ENCODE measurements at regions of chr10 and their contacts with region 1.

Region 1: GRCh38 chr10:70758757-70759514 is 26.2 kb downstream of the TBATA start:
- DNase-seq: peak; percentile 48
- ATAC-seq: peak; percentile 78
- H3K4me3 ChIP-seq: no peak overlapping the region
- H3K27ac ChIP-seq: peak overlapping the region; percentile 40; the same call in 1 of the 2 replicates
- H3K4me1 ChIP-seq: no peaks in the 10 kb centered on the region
- H3K27me3 ChIP-seq: no peaks in the 10 kb centered on the region
- CTCF ChIP-seq: peak; percentile 89

Region 2: DNA sequence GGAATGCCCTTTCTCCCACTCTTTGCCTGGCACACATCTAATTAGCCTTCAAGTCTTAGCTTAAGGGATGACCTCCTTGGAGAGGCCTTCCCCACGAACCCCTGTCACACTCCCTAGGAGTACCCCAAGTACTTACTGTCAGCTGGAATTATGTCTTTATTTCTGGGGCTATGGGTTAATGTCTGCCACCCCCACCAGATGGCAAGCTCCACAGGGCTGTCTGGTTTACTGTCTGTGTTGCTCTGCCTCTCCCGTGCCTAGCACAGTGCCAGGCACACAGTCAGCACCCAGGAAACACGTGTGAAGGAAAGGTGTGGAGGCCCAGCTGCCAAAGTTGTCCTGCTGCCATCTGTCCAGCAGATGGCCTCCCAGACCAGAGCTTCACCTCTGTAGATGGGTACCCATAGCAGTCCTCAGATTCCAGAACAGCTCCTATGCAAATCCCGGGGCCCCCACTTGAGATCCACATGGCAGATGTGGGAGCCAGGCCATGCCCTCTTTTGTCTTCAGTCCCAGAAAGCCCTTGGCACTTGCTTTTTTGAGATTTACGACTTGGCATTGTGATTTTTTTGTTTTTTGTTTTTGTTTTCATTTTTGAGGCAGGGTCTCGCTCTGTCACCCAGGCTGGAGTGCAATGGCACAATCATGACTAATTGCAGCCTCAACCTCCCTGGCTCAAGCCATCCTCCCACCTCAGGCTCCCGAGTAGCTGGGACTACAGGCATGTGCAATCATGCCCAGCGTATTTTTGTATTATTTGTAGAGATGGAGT is 297.5 kb before region 1 on chr10:
- CTCF ChIA-PET with region 1: interaction called, 3 read pairs
- POLR2A ChIA-PET with region 1: no interaction called
- in situ Hi-C with region 1: no loop called
- intact Hi-C with region 1: loop called (anchors 5 kb)
- DNase-seq: peak; percentile 55
- ATAC-seq: peak; percentile 86
- H3K4me3 ChIP-seq: no peak overlapping the region
- H3K27ac ChIP-seq: no peak overlapping the region
- H3K4me1 ChIP-seq: peaks cover 6% of the 10 kb centered on the region
- H3K27me3 ChIP-seq: no peaks in the 10 kb centered on the region
- CTCF ChIP-seq: peak; percentile 98

Region 3: GRCh38 chr10:70493660-70494234 is 265.2 kb before region 1 on chr10:
- CTCF ChIA-PET with region 1: no interaction called
- POLR2A ChIA-PET with region 1: no interaction called
- in situ Hi-C with region 1: no loop called
- intact Hi-C with region 1: no loop called
- DNase-seq: no peak
- ATAC-seq: no peak
- H3K4me3 ChIP-seq: no peak overlapping the region
- H3K27ac ChIP-seq: no peak overlapping the region
- H3K4me1 ChIP-seq: no peaks in the 10 kb centered on the region
- H3K27me3 ChIP-seq: no peaks in the 10 kb centered on the region
- CTCF ChIP-seq: no peak

Region 4: DNA sequence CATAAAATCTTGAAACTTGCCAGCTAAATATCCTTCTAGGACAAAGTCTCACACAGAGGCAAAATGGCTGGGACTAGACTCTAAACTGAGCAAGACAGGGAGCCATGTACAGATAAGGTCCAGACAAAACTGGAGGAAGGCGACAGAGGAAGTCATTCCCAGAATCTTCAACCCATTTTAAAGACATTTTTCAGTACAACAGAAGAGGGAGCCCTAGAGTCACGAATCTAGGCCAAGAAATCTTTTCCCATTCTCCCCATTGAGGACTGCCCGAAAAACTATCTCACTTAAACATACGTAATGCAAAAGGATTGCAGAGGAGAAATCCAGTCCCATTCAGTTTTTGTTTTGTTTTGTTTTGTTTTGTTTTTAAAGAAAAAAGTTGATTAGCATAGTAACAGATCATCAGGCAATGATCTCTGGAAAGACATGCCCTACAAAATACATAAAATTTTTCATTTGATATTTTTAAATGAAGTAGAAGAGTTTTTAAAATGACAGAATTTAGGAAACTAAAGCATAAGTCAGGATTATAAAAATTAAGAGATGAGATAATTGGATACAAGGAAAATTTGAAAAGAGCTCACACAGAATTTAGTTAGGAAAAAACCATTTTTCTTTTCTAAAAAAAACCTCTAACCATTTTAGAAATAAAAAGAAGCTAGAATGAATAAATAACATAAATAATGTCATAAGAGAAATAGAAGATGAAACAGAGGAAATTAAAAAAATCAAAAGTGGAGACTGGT is 139.5 kb before region 1 on chr10:
- CTCF ChIA-PET with region 1: no interaction called
- POLR2A ChIA-PET with region 1: no interaction called
- in situ Hi-C with region 1: no loop called
- intact Hi-C with region 1: loop called (anchors 10 kb)
- DNase-seq: peak; percentile 10
- ATAC-seq: no peak
- H3K4me3 ChIP-seq: no peak overlapping the region
- H3K27ac ChIP-seq: no peak overlapping the region
- H3K4me1 ChIP-seq: no peaks in the 10 kb centered on the region
- H3K27me3 ChIP-seq: peaks cover 23% of the 10 kb centered on the region
- CTCF ChIP-seq: peak; percentile 50

Region 5: GRCh38 chr10:70682920-70683600 is 75.9 kb before region 1 on chr10:
- CTCF ChIA-PET with region 1: no interaction called
- POLR2A ChIA-PET with region 1: no interaction called
- in situ Hi-C with region 1: no loop called
- intact Hi-C with region 1: no loop called
- DNase-seq: no peak
- ATAC-seq: no peak
- H3K4me3 ChIP-seq: no peak overlapping the region
- H3K27ac ChIP-seq: no peak overlapping the region
- H3K4me1 ChIP-seq: no peaks in the 10 kb centered on the region; the same call in 1 of the 2 replicates
- H3K27me3 ChIP-seq: no peaks in the 10 kb centered on the region
- CTCF ChIP-seq: no peak

Region 6: GRCh38 chr10:70699659-70700174 is 59.2 kb before region 1 on chr10:
- CTCF ChIA-PET with region 1: no interaction called
- POLR2A ChIA-PET with region 1: no interaction called
- in situ Hi-C with region 1: no loop called
- intact Hi-C with region 1: no loop called
- DNase-seq: no peak
- ATAC-seq: no peak
- H3K4me3 ChIP-seq: no peak overlapping the region
- H3K27ac ChIP-seq: no peak overlapping the region
- H3K4me1 ChIP-seq: no peaks in the 10 kb centered on the region
- H3K27me3 ChIP-seq: peaks cover 5% of the 10 kb centered on the region; the same call in 1 of the 2 replicates
- CTCF ChIP-seq: no peak

Measured in Panc1 (cell line).